ENCODE measurements at regions of chr6 and their contacts with region 1.

Region 1: GRCh38 chr6:101083533-101084172 is 202.5 kb upstream of the ASCC3 start:
- DNase-seq: peak; percentile 92
- ATAC-seq: peak; percentile 81
- H3K4me3 ChIP-seq: peak overlapping the region; percentile 44; the same call in 1 of the 2 replicates
- H3K27ac ChIP-seq: peak overlapping the region; percentile 99
- H3K4me1 ChIP-seq: peaks cover 70% of the 10 kb centered on the region
- H3K27me3 ChIP-seq: no peaks in the 10 kb centered on the region
- CTCF ChIP-seq: no peak

Region 2: DNA sequence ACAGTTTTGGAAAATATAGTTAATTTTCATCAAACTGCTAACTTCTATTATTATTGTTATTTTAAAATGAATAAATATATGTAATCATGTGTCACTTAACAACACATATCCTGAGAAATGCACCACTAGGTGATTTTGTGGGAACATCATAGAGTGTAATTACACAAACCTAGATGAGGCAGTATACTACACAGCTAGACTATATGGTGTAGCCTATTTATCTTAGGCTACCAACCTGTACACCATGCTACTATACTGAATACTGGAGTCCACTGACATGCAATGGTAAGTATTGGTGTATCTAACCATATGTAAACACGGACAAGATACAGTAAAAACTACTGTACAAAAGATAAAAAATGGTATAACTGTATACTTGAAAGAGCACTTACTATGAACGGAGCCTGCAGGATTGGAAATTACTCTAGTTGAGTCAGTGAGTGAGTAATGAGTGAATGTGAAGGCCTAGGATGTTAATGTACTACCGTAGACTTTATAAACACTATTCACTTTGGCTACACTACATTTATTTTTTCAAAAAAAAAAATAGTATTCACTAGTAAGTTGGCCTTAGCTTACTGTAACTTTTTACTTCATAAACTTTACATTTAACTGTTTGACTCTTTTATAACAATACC is 274.9 kb before region 1 on chr6:
- CTCF ChIA-PET with region 1: no interaction called
- POLR2A ChIA-PET with region 1: no interaction called
- intact Hi-C with region 1: loop called (anchors 10 kb)
- DNase-seq: peak; percentile 46
- ATAC-seq: peak; percentile 94
- H3K4me3 ChIP-seq: no peak overlapping the region
- H3K27ac ChIP-seq: peak overlapping the region; percentile 19; the same call in 1 of the 2 replicates
- H3K4me1 ChIP-seq: peaks cover 14% of the 10 kb centered on the region
- H3K27me3 ChIP-seq: no peaks in the 10 kb centered on the region
- CTCF ChIP-seq: no peak

Region 3: GRCh38 chr6:100880853-100881706 is 202.6 kb before region 1 on chr6 and contains the start of gene ASCC3:
- CTCF ChIA-PET with region 1: no interaction called
- POLR2A ChIA-PET with region 1: interaction called, 3 read pairs
- intact Hi-C with region 1: loop called (anchors 10 kb)
- DNase-seq: peak; percentile 88
- ATAC-seq: peak; percentile 96
- H3K4me3 ChIP-seq: peak within 1 kb of the TSS; percentile 96
- H3K27ac ChIP-seq: peak within 1 kb of the TSS; percentile 81
- H3K4me1 ChIP-seq: peaks cover 20% of the 10 kb centered on the region
- H3K27me3 ChIP-seq: no peaks in the 10 kb centered on the region
- CTCF ChIP-seq: no peak
- total RNA-seq, gene ASCC3: 27.7 and 29.8 TPM in 2 replicates

Region 4: DNA sequence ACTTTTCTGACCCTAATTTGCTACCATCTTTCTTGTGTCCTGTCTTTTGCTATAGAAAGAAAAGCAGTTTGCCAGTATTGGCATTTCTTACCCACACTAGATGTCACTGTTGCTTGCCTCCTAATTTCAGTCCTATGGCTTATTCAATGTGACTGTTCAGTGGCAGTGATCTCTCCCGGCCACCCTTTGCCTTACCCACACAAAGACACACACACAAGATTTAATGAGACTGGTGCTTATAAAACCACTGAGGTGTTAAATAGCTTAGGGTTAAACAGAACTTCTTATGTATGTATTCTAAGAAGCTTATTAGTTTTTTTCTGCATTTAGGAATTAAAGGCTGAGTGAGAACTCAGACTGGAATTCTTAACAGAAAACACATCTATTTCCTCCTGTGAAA is 31.1 kb after region 1 on chr6:
- CTCF ChIA-PET with region 1: no interaction called
- POLR2A ChIA-PET with region 1: no interaction called
- intact Hi-C with region 1: loop called (anchors 5 kb)
- DNase-seq: peak; percentile 58
- ATAC-seq: peak; percentile 51
- H3K4me3 ChIP-seq: no peak overlapping the region
- H3K27ac ChIP-seq: no peak overlapping the region
- H3K4me1 ChIP-seq: peaks cover 53% of the 10 kb centered on the region
- H3K27me3 ChIP-seq: no peaks in the 10 kb centered on the region
- CTCF ChIP-seq: peak; percentile 66

Region 5: GRCh38 chr6:101386982-101387381 is 303.3 kb after region 1 on chr6:
- CTCF ChIA-PET with region 1: no interaction called
- POLR2A ChIA-PET with region 1: no interaction called
- intact Hi-C with region 1: no loop called
- DNase-seq: peak; percentile 23
- ATAC-seq: no peak; the same call in 1 of the 2 replicates
- H3K4me3 ChIP-seq: no peak overlapping the region
- H3K27ac ChIP-seq: no peak overlapping the region
- H3K4me1 ChIP-seq: peaks cover 8% of the 10 kb centered on the region; the same call in 1 of the 2 replicates
- H3K27me3 ChIP-seq: 0 out of 2 replicates have a peak, but pooled peaks cover under 1% of the 10 kb centered on the region
- CTCF ChIP-seq: peak; percentile 35; the same call in 1 of the 2 replicates